PC-9 (cell line): ENCODE measurements at regions of chr2 and their contacts with region 1.

Region 1: DNA sequence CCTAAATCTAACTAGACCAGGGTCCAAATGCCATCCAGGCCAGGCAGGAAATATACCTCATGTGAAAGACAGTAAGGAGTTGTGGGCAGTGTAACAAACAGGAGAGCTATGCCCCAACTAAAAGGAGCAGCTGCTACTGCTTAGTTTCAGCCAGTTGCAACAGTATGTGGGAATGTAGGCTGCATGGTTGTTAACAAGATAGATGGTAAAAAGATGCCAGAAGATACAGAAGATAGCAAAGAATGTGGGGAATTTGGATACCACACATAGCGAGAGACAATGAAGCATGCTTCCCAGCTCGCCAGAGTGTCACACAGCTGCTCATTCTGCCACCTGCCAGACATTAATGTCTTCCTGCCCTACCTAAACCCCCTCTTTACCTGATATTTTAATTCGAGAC is 39.4 kb upstream of the CYBRD1 start:
- DNase-seq: no peak
- H3K4me3 ChIP-seq: no peak overlapping the region
- H3K27ac ChIP-seq: no peak overlapping the region
- H3K4me1 ChIP-seq: no peaks in the 10 kb centered on the region
- H3K27me3 ChIP-seq: no peaks in the 10 kb centered on the region
- CTCF ChIP-seq: no peak

Region 2: GRCh38 chr2:171512683-171513195 is 29.9 kb after region 1 on chr2:
- CTCF ChIA-PET with region 1: no interaction called
- POLR2A ChIA-PET with region 1: interaction called, 16 read pairs
- intact Hi-C with region 1: no loop called
- DNase-seq: peak in 1 of 2 experiments; percentile 10
- H3K4me3 ChIP-seq: no peak overlapping the region
- H3K27ac ChIP-seq: no peak overlapping the region
- H3K4me1 ChIP-seq: 0 out of 2 replicates have a peak, but pooled peaks cover 4% of the 10 kb centered on the region
- H3K27me3 ChIP-seq: no peaks in the 10 kb centered on the region
- CTCF ChIP-seq: no peak

Region 3: DNA sequence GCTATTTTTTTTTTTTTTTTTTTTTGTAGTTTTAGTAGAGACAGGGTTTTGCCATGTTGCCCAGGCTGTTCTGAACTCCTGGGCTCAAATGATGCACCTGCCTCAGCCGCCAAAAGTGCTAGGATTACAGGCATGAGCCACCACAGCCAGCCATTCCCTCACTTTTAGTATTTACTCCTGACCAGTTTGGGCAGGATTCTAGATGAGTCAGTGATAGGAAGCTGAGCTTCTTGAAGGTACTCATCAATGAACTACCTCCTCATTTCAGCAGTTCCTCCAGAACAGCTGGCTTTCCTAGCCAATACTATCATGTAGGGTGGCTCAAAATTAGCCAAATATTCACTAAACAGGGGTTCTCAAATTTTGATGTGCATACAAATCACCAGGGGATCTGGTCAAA is 96.6 kb after region 1 on chr2:
- CTCF ChIA-PET with region 1: no interaction called
- POLR2A ChIA-PET with region 1: no interaction called
- intact Hi-C with region 1: no loop called
- DNase-seq: no peak
- H3K4me3 ChIP-seq: no peak overlapping the region
- H3K27ac ChIP-seq: no peak overlapping the region
- H3K4me1 ChIP-seq: no peaks in the 10 kb centered on the region
- H3K27me3 ChIP-seq: no peaks in the 10 kb centered on the region
- CTCF ChIP-seq: no peak

Region 4: GRCh38 chr2:172350839-172351479 is 868.1 kb after region 1 on chr2:
- CTCF ChIA-PET with region 1: interaction called, 12 read pairs
- POLR2A ChIA-PET with region 1: no interaction called
- intact Hi-C with region 1: no loop called
- DNase-seq: no peak
- H3K4me3 ChIP-seq: no peak overlapping the region
- H3K27ac ChIP-seq: no peak overlapping the region
- H3K4me1 ChIP-seq: peaks cover 24% of the 10 kb centered on the region
- H3K27me3 ChIP-seq: no peaks in the 10 kb centered on the region
- CTCF ChIP-seq: no peak

Region 5: GRCh38 chr2:172674034-172674967 is 1191.4 kb after region 1 on chr2:
- CTCF ChIA-PET with region 1: no interaction called
- POLR2A ChIA-PET with region 1: interaction called, 15 read pairs
- intact Hi-C with region 1: no loop called
- DNase-seq: peak in 1 of 2 experiments; percentile 29
- H3K4me3 ChIP-seq: no peak overlapping the region
- H3K27ac ChIP-seq: no peak overlapping the region
- H3K4me1 ChIP-seq: peaks cover 28% of the 10 kb centered on the region
- H3K27me3 ChIP-seq: no peaks in the 10 kb centered on the region
- CTCF ChIP-seq: no peak; the same call in 1 of the 2 replicates